ENCODE measurements at regions of chr12 and their contacts with region 1.

Region 1: GRCh38 chr12:122500685-122501488 is at the start of gene ZCCHC8:
- DNase-seq: peak; percentile 97
- ATAC-seq: peak; percentile 91
- H3K4me3 ChIP-seq: peak within 1 kb of the TSS; percentile 71 to 93 (median 84)
- H3K4me3 Mint-ChIP-seq: peak within 1 kb of the TSS; percentile 83
- H3K27ac ChIP-seq: peak within 1 kb of the TSS; percentile 79 to 93
- H3K27ac Mint-ChIP-seq: peak within 1 kb of the TSS; percentile 87
- H3K4me1 ChIP-seq: peaks cover 15 to 30% of the 10 kb centered on the region in 2 donors
- H3K4me1 Mint-ChIP-seq: peaks cover 36% of the 10 kb centered on the region
- H3K27me3 ChIP-seq: no peaks in the 10 kb centered on the region
- H3K27me3 Mint-ChIP-seq: no peaks in the 10 kb centered on the region
- CTCF ChIP-seq: no peak
- total RNA-seq, gene ZCCHC8: 56.2 and 57.0 TPM in 2 replicates

Region 2: GRCh38 chr12:122225683-122226407 is 275.0 kb before region 1 on chr12 and contains the start of gene DIABLO:
- CTCF ChIA-PET with region 1: no interaction called
- POLR2A ChIA-PET with region 1: interaction called, 3 read pairs
- intact Hi-C with region 1: loop called (anchors 1 kb)
- DNase-seq: peak; percentile 100
- ATAC-seq: peak; percentile 93
- H3K4me3 ChIP-seq: peak within 1 kb of the TSS; percentile 51 to 98 (median 90)
- H3K4me3 Mint-ChIP-seq: peak within 1 kb of the TSS; percentile 94
- H3K27ac ChIP-seq: peak within 1 kb of the TSS; percentile 94 to 97
- H3K27ac Mint-ChIP-seq: peak within 1 kb of the TSS; percentile 96
- H3K4me1 ChIP-seq: peaks cover 19 to 21% of the 10 kb centered on the region in 2 donors
- H3K4me1 Mint-ChIP-seq: peaks cover 34% of the 10 kb centered on the region
- H3K27me3 ChIP-seq: no peaks in the 10 kb centered on the region
- H3K27me3 Mint-ChIP-seq: no peaks in the 10 kb centered on the region
- CTCF ChIP-seq: no peak
- total RNA-seq, gene DIABLO: 42.8 and 44.6 TPM in 2 replicates

Region 3: DNA sequence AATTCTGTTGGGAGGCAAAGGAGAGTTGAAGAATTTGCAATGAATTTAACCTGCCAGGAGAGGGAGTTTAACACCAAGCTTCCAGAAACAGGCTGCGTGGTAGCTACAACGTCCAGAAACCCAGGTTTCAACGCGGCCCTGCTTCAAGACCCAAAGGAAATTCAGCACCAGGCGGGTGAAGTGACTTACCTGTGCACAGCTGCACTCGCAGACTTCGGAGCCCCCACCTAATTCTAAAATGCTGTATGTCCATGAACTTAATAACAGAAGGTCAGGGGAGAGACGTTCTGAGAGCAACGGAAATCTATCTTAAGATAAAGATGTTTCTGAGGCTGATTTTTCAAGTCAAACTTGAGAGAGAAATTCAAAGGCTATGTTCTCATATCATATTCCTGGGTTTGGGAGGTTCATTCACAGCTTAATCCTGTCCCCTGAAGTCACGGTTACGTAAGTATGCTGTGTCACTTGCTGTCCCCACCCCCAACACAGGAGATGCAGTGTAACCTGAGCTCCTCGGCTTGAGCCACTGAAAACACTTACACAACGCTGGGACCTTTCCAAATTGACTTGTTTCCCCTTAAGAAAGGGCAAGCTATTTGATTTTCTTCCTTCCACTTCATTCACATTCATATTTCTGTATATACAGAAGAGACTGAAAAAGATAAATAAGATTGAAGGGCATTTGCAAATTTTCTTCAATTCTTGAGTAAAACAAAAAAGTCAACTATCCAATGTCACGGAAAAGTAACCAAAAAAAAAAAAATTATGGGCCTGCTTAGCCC is 101.1 kb before region 1 on chr12:
- CTCF ChIA-PET with region 1: interaction called, 13 read pairs
- POLR2A ChIA-PET with region 1: interaction called, 3 read pairs
- intact Hi-C with region 1: no loop called
- DNase-seq: peak; percentile 77
- ATAC-seq: peak; percentile 66
- H3K4me3 ChIP-seq: peak overlapping the region in 1 of 5 experiments; percentile 6
- H3K4me3 Mint-ChIP-seq: peak overlapping the region; percentile 75
- H3K27ac ChIP-seq: peak overlapping the region in 1 of 2 donors; percentile 38
- H3K27ac Mint-ChIP-seq: peak overlapping the region; percentile 73
- H3K4me1 ChIP-seq: peaks cover 23 to 31% of the 10 kb centered on the region in 2 donors
- H3K4me1 Mint-ChIP-seq: peaks cover 31% of the 10 kb centered on the region
- H3K27me3 ChIP-seq: no peaks in the 10 kb centered on the region
- H3K27me3 Mint-ChIP-seq: no peaks in the 10 kb centered on the region
- CTCF ChIP-seq: peak; percentile 87

Region 4: GRCh38 chr12:122526683-122527477 is 26.0 kb after region 1 on chr12 and contains the starts of genes KNTC1 and RSRC2:
- CTCF ChIA-PET with region 1: interaction called, 11 read pairs
- POLR2A ChIA-PET with region 1: interaction called, 63 read pairs
- intact Hi-C with region 1: loop called (anchors 1 kb)
- DNase-seq: peak; percentile 99
- ATAC-seq: peak; percentile 92
- H3K4me3 ChIP-seq: peak within 1 kb of the TSS; percentile 69 to 99 (median 97)
- H3K4me3 Mint-ChIP-seq: no peak within 1 kb of the TSS
- H3K27ac ChIP-seq: peak within 1 kb of the TSS; percentile 90 to 97
- H3K27ac Mint-ChIP-seq: no peak within 1 kb of the TSS
- H3K4me1 ChIP-seq: peaks cover 42% of the 10 kb centered on the region in 2 donors
- H3K4me1 Mint-ChIP-seq: peaks cover 35% of the 10 kb centered on the region
- H3K27me3 ChIP-seq: no peaks in the 10 kb centered on the region
- H3K27me3 Mint-ChIP-seq: no peaks in the 10 kb centered on the region
- CTCF ChIP-seq: no peak
- total RNA-seq, gene KNTC1: 49.0 and 52.4 TPM in 2 replicates
- total RNA-seq, gene RSRC2: 151 and 155 TPM in 2 replicates